Heart left ventricle (tissue), 16 donors: ENCODE measurements at regions of chr9 and their contacts with region 1.

Region 1: GRCh38 chr9:95923794-95924193 is 48.3 kb downstream of the ERCC6L2 start:
- DNase-seq: no peak
- ATAC-seq: no peak
- H3K4me3 ChIP-seq: no peak overlapping the region
- H3K27ac ChIP-seq: no peak overlapping the region
- H3K4me1 ChIP-seq: no peaks in the 10 kb centered on the region
- H3K27me3 ChIP-seq: no peaks in the 10 kb centered on the region
- CTCF ChIP-seq: no peak
- POLR2A ChIP-seq: no peak

Region 2: DNA sequence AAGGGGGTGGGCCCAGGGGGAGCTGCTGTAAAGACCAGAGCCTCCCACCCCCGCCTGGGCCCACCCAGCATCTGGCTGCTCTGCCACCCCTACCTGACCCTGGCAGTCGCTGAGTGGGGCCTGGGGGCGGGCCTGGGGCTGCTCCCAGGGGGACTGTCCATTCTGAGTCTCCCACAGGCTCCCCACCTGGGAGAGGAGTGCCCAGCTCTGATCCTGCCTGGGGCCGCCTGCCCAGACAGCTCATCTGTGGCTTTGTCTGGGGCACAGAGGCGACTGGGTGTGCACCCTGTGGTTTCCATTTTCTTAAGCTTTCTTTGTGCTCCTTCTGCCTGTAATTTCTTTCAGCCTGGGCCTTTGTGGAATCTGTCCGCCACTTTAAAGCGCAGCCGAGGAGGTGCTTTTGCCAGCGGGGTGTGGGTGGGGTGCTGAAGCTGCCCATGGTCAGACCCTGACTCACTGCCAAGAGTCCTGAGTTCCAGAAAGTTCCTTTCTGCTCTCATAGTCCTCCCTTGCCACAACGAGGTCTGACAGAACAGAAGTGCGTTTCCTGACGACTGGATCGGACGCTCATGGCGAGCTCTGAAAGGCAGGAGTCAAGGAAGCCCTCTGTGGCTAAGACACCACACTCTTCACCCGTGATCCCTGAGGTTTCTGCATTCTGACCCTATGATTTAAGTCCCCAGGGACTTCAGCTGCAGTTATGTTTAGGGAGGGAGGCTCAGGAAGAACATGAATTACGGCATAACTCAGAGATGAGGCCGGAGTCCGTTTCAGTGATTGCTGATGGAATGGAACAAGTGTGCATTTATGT is 831.3 kb before region 1 on chr9:
- intact Hi-C with region 1: no loop called
- DNase-seq: peak in 1 of 5 donors; percentile 49
- ATAC-seq: peak in 2 of 4 donors; percentile 1 to 3
- H3K4me3 ChIP-seq: no peak overlapping the region
- H3K27ac ChIP-seq: peak overlapping the region; percentile 61 to 90 (median 82)
- H3K4me1 ChIP-seq: peaks cover 13 to 96% (median 78%) of the 10 kb centered on the region in 12 donors
- H3K27me3 ChIP-seq: no peaks in the 10 kb centered on the region
- CTCF ChIP-seq: no peak
- POLR2A ChIP-seq: no peak

Region 3: DNA sequence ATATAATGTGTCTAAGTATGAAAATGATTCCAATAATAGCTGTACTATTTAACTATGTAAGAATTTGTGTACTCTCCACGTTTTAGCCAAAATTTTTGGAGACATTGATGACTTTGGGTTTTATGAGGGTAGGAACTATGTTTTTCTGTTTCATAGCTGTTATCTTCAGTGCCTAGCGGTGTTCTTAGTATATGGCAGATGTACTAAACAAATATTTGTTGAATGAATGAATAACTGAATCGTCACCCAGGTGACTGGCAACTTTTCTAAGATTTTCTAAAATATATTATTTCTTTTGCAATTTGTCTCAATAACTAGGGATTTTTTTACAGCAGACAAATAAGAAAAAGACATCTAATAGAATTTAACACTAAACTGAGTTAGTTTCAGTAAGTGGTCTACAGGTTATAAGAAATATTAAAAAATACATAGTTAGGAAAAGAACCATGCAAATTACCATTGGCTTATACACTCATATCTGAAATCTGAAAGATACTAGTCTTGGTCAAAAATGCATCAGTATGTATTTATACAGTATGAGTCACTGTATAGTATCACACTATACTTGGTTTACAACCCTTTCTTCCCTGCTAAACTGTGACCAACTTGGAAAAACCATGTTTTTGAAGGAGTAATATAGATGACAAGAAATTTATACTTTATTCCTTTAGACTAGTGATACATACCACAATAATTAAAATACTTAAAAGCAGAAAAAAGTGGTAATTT is 58.8 kb before region 1 on chr9:
- intact Hi-C with region 1: loop called in 1 of 10 experiments (anchors 10 kb)
- DNase-seq: no peak
- ATAC-seq: no peak
- H3K4me3 ChIP-seq: no peak overlapping the region
- H3K27ac ChIP-seq: no peak overlapping the region
- H3K4me1 ChIP-seq: no peaks in the 10 kb centered on the region
- H3K27me3 ChIP-seq: no peaks in the 10 kb centered on the region
- CTCF ChIP-seq: no peak
- POLR2A ChIP-seq: no peak

Region 4: DNA sequence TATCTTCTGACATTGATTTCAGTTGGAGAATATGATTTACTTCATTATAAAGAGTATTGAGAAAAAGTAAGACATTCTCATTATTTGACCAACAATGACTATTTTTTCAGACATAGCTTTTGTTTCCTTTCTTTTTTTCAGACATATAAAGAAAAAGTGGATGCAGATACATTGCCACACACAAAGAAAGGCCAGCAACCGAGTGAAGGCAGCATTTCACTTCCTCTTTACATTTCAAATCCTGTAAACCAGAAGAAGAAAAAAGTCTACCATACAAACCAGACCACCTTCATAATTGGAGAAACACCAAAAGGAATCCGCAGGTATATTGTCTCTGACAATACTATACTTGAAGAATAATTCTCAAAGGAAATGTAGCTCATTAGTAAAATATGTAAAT is 80.6 kb after region 1 on chr9:
- intact Hi-C with region 1: no loop called
- DNase-seq: no peak
- ATAC-seq: no peak
- H3K4me3 ChIP-seq: no peak overlapping the region
- H3K27ac ChIP-seq: no peak overlapping the region
- H3K4me1 ChIP-seq: peaks cover 0 to 9% (median 0%) of the 10 kb centered on the region in 12 donors
- H3K27me3 ChIP-seq: no peaks in the 10 kb centered on the region
- CTCF ChIP-seq: no peak
- POLR2A ChIP-seq: no peak

Region 5: GRCh38 chr9:96040591-96041461 is 117.0 kb after region 1 on chr9:
- intact Hi-C with region 1: no loop called
- DNase-seq: no peak
- ATAC-seq: no peak
- H3K4me3 ChIP-seq: no peak overlapping the region
- H3K27ac ChIP-seq: peak overlapping the region in 1 of 12 donors; percentile 37
- H3K4me1 ChIP-seq: no peaks in the 10 kb centered on the region
- H3K27me3 ChIP-seq: no peaks in the 10 kb centered on the region
- CTCF ChIP-seq: no peak
- POLR2A ChIP-seq: no peak